CD8-positive, alpha-beta T cell (primary cell): ENCODE measurements at regions of chr6 and their contacts with region 1.

Region 1: DNA sequence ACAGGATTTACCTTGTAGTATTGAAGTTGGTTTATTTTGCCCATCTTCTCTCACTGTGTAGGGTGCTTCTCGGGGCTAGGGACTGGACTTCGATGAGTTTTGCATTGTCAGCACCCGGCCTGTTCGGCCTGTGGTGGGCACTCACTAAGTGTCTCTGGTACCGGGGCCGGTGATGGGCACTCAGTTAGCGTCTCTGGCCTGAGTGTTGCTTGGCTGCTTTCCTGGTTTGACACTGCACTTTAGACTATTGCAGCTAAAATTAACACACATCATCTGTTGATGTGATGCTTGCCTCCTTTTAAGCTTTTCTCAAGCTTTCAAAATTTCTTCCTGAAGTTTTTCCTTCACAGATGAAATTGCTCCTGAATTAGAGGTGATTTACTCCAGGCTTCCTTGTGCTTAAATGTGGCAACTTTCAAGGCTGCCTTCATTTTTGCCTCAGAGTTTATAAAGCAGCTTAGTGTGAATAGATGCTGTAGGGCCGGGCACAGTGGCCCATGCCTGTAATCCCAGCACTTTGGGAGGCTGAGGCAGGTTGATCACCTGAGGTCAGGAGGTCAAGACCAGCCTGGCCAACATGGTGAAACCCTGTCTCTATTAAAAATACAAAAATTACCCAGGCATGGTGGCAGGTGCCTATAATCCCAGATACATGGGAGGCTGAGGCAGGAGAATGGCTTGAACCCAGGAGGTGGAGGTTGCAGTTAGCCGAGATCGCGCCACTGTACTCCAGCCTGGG is 41.7 kb upstream of the TULP4 start:
- DNase-seq: peak in 1 of 9 experiments; percentile 32
- ATAC-seq: no peak
- H3K4me3 ChIP-seq: peak overlapping the region in 1 of 2 experiments; percentile 17
- H3K4me3 Mint-ChIP-seq: peak overlapping the region; percentile 45
- H3K27ac ChIP-seq: peak overlapping the region; percentile 29 to 52
- H3K27ac Mint-ChIP-seq: peak overlapping the region; percentile 78
- H3K4me1 ChIP-seq: peaks cover 14% of the 10 kb centered on the region
- H3K4me1 Mint-ChIP-seq: peaks cover 27% of the 10 kb centered on the region
- H3K27me3 ChIP-seq: no peaks in the 10 kb centered on the region
- H3K27me3 Mint-ChIP-seq: no peaks in the 10 kb centered on the region
- CTCF ChIP-seq: no peak

Region 2: DNA sequence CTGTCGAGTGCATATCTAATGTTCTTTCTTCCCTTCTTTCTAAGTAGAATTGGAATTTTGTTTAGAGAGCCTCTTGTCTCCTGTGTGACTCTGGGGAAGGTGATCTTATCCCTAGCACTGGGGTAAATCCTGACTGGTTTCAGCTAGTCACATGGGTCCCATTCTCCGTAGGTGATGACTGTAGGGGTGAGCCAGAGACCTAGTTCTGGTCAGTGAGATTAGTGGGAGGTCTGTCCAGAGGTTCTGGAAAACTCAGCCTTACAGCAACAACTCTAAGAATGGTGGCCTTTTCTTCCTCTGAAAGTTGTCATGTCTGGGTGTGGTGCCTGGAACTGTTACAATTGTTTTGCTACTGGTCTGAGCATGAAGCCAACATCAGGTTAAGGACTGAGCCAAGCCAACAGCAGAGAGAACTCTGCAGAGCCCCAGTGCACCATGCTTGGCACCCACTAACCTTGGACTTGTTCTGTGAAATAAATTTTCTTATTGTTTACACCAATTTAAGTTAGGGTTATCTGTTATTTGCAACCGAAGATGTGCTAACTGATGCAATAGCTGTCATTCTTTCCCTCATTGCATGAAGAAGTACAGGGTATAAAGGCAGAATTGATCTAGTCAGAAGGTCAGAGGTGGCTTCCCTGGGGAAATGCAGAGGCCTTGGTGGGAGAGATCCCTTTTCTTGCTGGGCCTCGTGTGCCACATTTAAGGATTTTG is 15.1 kb before region 1 on chr6:
- CTCF ChIA-PET with region 1: interaction called, 3 read pairs
- POLR2A ChIA-PET with region 1: interaction called, 10 read pairs
- intact Hi-C with region 1: no loop called
- DNase-seq: no peak
- ATAC-seq: no peak
- H3K4me3 ChIP-seq: no peak overlapping the region
- H3K4me3 Mint-ChIP-seq: no peak overlapping the region
- H3K27ac ChIP-seq: no peak overlapping the region
- H3K27ac Mint-ChIP-seq: peak overlapping the region; percentile 53
- H3K4me1 ChIP-seq: peaks cover 26% of the 10 kb centered on the region
- H3K4me1 Mint-ChIP-seq: peaks cover 49% of the 10 kb centered on the region
- H3K27me3 ChIP-seq: no peaks in the 10 kb centered on the region
- H3K27me3 Mint-ChIP-seq: no peaks in the 10 kb centered on the region
- CTCF ChIP-seq: no peak

Region 3: DNA sequence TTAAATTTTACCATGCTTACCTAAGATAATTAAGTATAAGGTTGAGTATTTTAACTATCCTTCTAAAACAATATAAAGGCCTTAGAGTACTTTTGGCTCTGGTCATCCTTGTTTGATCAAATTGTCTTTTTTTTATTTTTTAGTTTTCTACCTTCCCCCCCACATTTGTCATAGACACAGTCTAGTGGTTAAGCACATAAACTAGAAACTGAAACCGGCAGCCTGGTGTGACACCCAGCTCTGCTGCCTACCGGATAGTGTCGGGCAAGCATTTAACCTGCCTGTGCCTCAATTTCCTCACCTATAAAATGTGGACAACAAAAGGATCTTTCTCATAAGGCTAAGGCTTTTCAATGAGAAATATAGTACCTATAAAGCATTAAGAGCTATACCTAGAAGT is 20.1 kb after region 1 on chr6:
- CTCF ChIA-PET with region 1: interaction called, 3 read pairs
- POLR2A ChIA-PET with region 1: no interaction called
- intact Hi-C with region 1: loop called in 1 of 2 experiments (anchors 2 kb)
- DNase-seq: peak in 8 of 9 experiments; percentile 30 to 84 (median 65)
- ATAC-seq: peak; percentile 98
- H3K4me3 ChIP-seq: peak overlapping the region; percentile 11 to 25
- H3K4me3 Mint-ChIP-seq: peak overlapping the region; percentile 78
- H3K27ac ChIP-seq: peak overlapping the region; percentile 18 to 74
- H3K27ac Mint-ChIP-seq: peak overlapping the region; percentile 91
- H3K4me1 ChIP-seq: peaks cover 27% of the 10 kb centered on the region
- H3K4me1 Mint-ChIP-seq: peaks cover 54% of the 10 kb centered on the region
- H3K27me3 ChIP-seq: no peaks in the 10 kb centered on the region
- H3K27me3 Mint-ChIP-seq: no peaks in the 10 kb centered on the region
- CTCF ChIP-seq: no peak